Astrocyte of the cerebellum (primary cell): ENCODE measurements at regions of chr7 and their contacts with region 1.

Region 1: DNA sequence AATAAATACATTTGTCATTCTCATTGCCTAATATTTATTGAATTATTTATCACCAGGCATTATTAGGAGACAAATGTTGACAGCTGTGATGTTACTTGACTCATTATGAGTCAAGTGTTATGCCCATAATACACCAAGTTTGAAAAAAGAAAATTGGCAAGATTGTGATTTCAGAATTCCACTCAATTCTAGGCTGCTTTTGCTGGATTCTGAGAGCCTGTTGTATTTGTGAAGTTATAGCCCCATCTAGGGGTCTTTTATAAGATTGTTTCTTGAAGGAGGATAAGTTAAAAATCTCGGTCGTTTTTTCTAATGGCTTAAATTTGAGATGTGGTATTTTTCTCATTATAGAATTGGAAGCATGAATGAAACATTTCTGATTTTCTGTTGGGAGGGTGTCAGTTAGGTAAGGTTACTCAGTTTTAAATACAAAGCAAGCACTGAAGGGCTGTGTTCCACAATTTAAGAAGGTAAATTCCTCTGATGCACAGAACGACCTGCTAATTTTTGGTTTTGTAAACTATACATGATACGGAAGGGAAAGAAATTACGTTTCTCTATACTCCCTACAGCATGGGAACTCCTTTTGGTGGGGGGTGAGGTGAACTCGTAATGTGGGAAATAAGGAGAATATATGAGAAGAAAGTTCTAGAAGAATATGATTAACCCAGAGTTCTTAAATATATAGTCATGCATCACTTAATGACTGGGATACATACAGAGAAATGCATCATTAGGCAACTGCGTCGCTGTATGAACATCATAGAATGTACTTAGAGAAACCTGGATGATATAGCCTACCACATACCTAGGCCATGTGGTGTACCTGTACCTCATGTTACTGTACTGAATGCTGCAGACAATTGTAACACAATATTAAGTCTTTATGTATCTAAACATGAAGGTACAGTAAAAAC is 2.6 kb downstream of the STK31 start:
- DNase-seq: peak; percentile 72
- H3K4me3 ChIP-seq: no peak overlapping the region
- CTCF ChIP-seq: peak; percentile 34

Region 2: GRCh38 chr7:23273141-23273599 is 439.5 kb before region 1 on chr7:
- in situ Hi-C with region 1: loop called (anchors 25 kb)
- DNase-seq: peak; percentile 81
- H3K4me3 ChIP-seq: no peak overlapping the region
- CTCF ChIP-seq: peak; percentile 87

Region 3: DNA sequence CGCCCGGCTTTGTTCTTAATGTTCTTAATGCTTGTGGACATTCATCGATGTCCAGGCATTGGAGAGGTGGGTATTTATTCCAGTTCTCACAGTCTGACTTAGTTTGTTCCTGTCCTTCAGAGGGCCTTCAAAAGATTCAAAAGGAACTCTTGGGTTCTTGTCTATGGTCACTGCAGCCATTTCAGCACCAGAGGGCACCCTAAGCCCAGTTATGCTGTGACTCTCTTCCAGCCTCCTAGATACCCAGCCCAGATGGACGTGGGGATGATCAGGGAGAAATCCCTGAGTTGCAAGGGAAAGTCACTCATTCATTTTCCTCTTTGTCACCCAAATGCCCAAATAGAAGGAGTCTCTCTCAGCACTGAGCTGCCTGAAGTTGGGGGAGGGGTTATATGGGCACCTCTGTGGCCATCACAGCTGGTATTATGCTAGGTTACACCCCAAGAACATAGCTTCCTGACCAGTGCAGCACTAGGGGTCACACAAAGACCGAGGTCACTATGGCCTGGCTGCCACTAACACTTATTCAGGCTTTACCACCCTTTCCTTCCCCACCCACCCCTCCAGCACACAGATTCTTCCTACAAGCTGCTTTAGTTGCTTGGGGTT is 141.9 kb before region 1 on chr7:
- in situ Hi-C with region 1: loop called (anchors 10 kb)
- DNase-seq: peak; percentile 63
- H3K4me3 ChIP-seq: no peak overlapping the region
- CTCF ChIP-seq: peak; percentile 87